Ascending aorta (tissue), 2 donors: ENCODE measurements at regions of chr6 and their contacts with region 1.

Region 1: DNA sequence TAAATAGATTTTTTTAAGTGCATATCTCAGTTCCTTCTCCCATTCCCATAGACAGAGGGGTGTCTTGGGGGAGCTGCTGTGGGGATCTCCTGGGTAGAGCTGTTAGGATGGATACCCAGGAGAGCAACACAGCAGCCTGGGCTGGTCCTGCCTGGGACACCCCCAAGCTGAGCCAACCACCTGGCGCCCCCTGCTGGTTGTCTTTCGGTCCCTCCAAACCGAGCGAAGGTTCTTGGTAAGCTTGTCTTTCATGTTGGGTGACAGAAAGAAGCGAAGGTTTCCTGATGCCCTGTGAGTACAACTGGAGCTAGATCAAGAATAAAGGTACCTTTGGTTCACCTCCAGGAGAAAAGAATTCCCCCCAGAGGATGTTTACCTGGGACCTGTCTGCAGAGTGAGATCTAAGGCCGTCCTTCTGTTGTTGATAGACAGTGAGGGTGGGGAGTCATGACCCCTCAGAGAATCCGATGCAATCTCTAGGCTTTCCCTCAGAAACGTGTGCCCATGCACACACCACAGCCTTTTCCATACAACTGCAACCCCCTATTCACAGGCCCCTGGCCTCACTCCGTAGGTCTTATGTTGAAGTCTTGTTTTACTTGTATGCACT is 50.8 kb downstream of the SNX9 start:
- DNase-seq: peak in 1 of 2 donors; percentile 85
- H3K4me3 ChIP-seq: no peak overlapping the region
- H3K27ac ChIP-seq: no peak overlapping the region
- H3K4me1 ChIP-seq: no peaks in the 10 kb centered on the region
- H3K27me3 ChIP-seq: no peaks in the 10 kb centered on the region
- CTCF ChIP-seq: peak; percentile 63 to 78 (median 66)

Region 2: GRCh38 chr6:157667211-157668008 is 206.4 kb before region 1 on chr6:
- intact Hi-C with region 1: loop called (anchors 10 kb)
- DNase-seq: peak in 1 of 2 donors; percentile 78
- H3K4me3 ChIP-seq: no peak overlapping the region
- H3K27ac ChIP-seq: no peak overlapping the region
- H3K4me1 ChIP-seq: peaks cover 11 to 14% of the 10 kb centered on the region in 2 donors
- H3K27me3 ChIP-seq: no peaks in the 10 kb centered on the region
- CTCF ChIP-seq: peak; percentile 75 to 85 (median 82)

Region 3: DNA sequence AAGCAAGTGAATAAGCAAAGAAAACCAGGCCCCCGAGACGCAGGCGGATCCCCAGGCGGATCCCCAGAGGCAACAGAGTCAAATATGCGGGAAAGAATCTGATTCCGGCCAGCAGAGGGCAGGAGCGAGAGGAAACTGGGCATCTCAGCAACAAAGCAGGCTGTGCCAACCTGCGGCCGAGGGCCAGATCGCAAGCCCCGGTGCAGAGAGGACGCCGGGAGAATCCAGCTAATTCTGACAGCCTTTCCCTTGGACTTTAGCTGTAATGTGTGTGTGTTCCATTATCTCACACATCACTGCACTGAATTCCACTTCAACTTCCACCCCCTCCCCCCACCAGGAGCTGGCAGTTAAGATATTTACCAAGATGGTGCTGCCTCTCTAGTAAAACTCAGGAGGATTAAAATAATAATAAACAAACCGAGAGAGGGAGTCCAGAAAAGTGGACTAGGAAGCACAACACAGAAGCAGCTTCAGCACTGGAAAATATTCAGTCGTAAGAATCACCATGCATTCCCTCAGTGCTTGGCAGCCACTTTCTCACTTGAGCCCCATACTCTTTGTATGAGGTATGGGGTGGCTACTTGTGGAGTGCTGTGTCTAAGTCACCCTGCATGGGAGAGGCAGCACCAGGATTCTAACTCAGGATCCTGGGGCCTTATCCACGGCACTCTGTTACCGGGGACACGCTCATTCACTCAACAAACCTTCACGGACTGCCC is 117.0 kb before region 1 on chr6:
- intact Hi-C with region 1: loop called (anchors 1 kb)
- DNase-seq: peak; percentile 47 to 95
- H3K4me3 ChIP-seq: peak overlapping the region in 1 of 2 donors; percentile 32
- H3K27ac ChIP-seq: peak overlapping the region; percentile 62 to 71
- H3K4me1 ChIP-seq: peaks cover 13 to 27% of the 10 kb centered on the region in 2 donors
- H3K27me3 ChIP-seq: no peaks in the 10 kb centered on the region
- CTCF ChIP-seq: peak; percentile 76 to 90 (median 89)

Region 4: DNA sequence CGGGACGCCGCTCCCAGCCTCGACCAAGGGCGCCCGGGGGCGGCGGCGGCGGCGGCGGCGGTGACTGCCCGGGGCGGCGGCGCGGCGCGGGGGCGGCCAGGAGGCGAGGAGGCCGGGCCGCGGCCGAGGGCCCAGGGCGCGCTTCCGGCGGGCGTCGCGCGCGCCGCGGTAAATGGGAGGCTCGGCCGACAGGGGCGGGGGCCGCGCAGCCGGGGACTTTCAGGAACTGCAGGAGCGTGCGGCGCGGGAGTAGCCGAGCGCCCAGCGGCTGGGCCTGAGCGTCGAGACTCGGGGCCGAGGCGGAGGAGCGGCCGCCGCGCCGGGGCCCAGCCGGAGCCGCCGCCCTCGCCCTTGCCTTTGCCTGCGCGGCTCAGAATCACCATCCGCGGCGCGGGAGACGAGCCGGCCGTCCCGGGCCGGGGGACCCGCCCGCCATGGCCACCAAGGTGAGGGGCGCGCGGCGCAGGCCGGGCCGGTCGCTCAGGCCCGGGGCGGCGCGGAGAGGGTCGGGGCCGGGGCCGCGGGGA is 50.8 kb before region 1 on chr6 and contains the start of gene SNX9:
- intact Hi-C with region 1: loop called (anchors 5 kb)
- DNase-seq: peak in 1 of 2 donors; percentile 89
- H3K4me3 ChIP-seq: peak within 1 kb of the TSS; percentile 90 to 98
- H3K27ac ChIP-seq: peak within 1 kb of the TSS; percentile 98 to 100
- H3K4me1 ChIP-seq: peaks cover 4 to 20% of the 10 kb centered on the region in 2 donors
- H3K27me3 ChIP-seq: no peaks in the 10 kb centered on the region
- CTCF ChIP-seq: peak in 1 of 3 experiments; percentile 28
- total RNA-seq, gene SNX9: 55.2 TPM